GM10248 (cell line): ENCODE measurements at regions of chr20 and their contacts with region 1.

Region 1: GRCh38 chr20:52295556-52295955 is 104.0 kb upstream of the ZFP64 start:
- DNase-seq: no peak
- CTCF ChIP-seq: no peak

Region 2: GRCh38 chr20:51955756-51956155 is 339.8 kb before region 1 on chr20:
- CTCF ChIA-PET with region 1: no interaction called
- POLR2A ChIA-PET with region 1: no interaction called
- DNase-seq: no peak
- CTCF ChIP-seq: no peak

Region 3: GRCh38 chr20:52279706-52280105 is 15.8 kb before region 1 on chr20:
- CTCF ChIA-PET with region 1: interaction called, 18 read pairs
- POLR2A ChIA-PET with region 1: no interaction called
- DNase-seq: no peak
- CTCF ChIP-seq: no peak

Region 4: DNA sequence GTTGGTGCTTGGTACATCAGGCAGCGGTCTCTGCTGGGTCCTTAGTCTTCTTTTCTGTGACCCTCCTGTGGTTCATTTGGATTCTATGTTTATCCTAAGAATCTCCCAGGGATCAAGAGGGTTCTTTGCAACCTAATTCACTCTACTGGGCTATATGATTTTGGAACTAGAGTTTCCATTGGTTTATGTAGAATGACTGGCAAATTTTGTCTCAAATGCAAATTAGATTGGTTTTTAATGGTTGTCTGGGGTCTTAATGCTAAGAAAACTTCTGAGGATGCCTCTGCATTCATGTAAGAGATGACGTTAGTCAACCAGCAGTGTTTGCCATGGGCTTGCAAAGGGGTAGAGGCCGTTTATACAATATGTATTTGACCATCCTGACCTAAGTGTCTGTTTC is 25.8 kb after region 1 on chr20:
- CTCF ChIA-PET with region 1: no interaction called
- POLR2A ChIA-PET with region 1: no interaction called
- DNase-seq: no peak
- CTCF ChIP-seq: no peak